Activated CD4-positive, alpha-beta memory T cell treated with anti-CD3 and anti-CD28 coated beads, Interleukin-2, amount 10 ng/mL, durations not matched to agents 7 days and 5 days (primary cell): ENCODE measurements at regions of chr4 and their contacts with region 1.

Region 1: GRCh38 chr4:110310795-110311194 is 112.4 kb upstream of the ELOVL6 start:
- DNase-seq: no peak
- H3K4me3 Mint-ChIP-seq: no peak overlapping the region
- H3K27ac Mint-ChIP-seq: no peak overlapping the region
- H3K4me1 Mint-ChIP-seq: no peaks in the 10 kb centered on the region
- H3K27me3 Mint-ChIP-seq: peaks cover 23% of the 10 kb centered on the region

Region 2: GRCh38 chr4:110510955-110511544 is 200.3 kb after region 1 on chr4:
- CTCF ChIA-PET with region 1: interaction called, 10 read pairs
- POLR2A ChIA-PET with region 1: no interaction called
- DNase-seq: no peak
- H3K4me3 Mint-ChIP-seq: no peak overlapping the region
- H3K27ac Mint-ChIP-seq: no peak overlapping the region
- H3K4me1 Mint-ChIP-seq: peaks cover 10% of the 10 kb centered on the region
- H3K27me3 Mint-ChIP-seq: no peaks in the 10 kb centered on the region